ENCODE measurements at regions of chr17 and their contacts with region 1.

Region 1: DNA sequence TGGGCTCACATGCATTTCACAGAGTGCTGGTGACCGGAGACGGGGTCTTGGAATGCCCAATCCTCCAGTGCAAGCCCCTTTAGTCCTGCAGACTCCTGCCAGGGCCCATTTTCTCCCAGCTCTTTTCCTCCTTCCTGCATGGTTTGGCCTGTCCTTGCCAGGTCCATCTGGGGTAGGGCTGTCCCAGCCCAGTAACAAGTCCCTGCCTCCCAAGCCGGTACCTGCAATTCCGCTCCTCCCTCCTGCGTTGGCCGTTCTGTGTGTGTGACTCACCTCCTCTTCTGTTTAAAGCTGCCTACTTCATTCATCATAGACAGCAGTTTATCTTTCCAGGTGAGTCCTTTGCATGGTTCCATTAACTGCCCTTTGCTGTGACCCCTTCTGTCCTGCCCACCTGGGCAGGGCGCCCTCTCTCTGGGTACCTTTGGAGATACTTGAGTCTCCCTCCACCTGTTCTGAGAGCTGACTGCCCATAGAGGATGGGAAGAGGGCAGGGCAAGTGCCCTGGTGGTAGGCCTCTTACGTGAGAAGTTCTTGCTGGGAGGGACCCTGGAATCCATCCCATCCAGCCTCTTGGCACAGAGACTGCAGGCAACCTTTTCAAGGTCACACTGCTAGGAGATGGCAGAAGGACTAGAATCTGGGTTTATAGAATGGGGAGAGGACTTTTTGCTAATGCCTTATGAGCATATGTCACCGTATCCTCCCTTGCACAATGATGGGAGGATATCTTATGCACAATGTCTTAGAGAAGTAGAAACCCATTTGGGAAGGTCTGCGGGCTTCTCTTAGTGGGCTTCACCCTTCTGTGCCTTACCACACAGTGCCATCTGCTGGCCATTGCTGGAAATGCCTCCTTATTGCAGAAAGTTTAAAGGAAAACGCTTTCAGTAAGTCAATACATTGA is 29.7 kb upstream of the LGALS9 start:
- DNase-seq: peak; percentile 66 to 75 (median 69)
- H3K4me3 ChIP-seq: no peak overlapping the region
- H3K4me3 Mint-ChIP-seq: no peak overlapping the region
- H3K27ac ChIP-seq: no peak overlapping the region
- H3K27ac Mint-ChIP-seq: peak overlapping the region in 2 of 7 donors; percentile 19 to 55
- H3K4me1 ChIP-seq: peaks cover 3% of the 10 kb centered on the region
- H3K4me1 Mint-ChIP-seq: peaks cover 0 to 5% (median 3%) of the 10 kb centered on the region in 4 donors
- H3K27me3 ChIP-seq: no peaks in the 10 kb centered on the region
- H3K27me3 Mint-ChIP-seq: no peaks in the 10 kb centered on the region

Region 2: DNA sequence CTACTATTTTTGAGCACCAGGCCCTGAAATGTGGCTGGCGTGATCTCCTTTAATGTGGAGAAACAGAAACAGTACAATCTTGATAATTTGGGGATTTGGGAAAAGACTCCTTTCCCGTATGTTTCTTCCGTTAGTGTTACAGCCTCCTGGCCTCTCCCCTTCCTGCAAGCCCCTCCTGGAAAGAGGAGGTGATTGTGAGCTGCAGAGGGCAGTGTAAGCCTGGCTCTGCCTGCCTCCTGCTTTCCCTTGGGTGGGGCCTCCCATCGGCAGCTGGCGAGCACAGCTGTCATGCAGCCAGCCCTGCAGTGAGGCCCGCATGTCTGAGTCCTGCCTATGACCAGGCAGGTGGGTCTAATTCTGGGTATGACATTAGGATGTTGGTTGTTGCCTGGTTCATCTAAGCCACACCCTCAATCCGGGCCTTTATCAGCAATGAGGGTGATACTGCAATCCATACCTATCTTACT is 356.1 kb before region 1 on chr17:
- CTCF ChIA-PET with region 1: interaction called, 332 read pairs
- POLR2A ChIA-PET with region 1: no interaction called
- intact Hi-C with region 1: no loop called
- DNase-seq: peak; percentile 5 to 38 (median 10)
- H3K4me3 ChIP-seq: no peak overlapping the region
- H3K4me3 Mint-ChIP-seq: no peak overlapping the region
- H3K27ac ChIP-seq: no peak overlapping the region
- H3K27ac Mint-ChIP-seq: no peak overlapping the region
- H3K4me1 ChIP-seq: no peaks in the 10 kb centered on the region
- H3K4me1 Mint-ChIP-seq: no peaks in the 10 kb centered on the region
- H3K27me3 ChIP-seq: no peaks in the 10 kb centered on the region
- H3K27me3 Mint-ChIP-seq: peaks cover 0 to 9% of the 10 kb centered on the region in 2 donors

Region 3: DNA sequence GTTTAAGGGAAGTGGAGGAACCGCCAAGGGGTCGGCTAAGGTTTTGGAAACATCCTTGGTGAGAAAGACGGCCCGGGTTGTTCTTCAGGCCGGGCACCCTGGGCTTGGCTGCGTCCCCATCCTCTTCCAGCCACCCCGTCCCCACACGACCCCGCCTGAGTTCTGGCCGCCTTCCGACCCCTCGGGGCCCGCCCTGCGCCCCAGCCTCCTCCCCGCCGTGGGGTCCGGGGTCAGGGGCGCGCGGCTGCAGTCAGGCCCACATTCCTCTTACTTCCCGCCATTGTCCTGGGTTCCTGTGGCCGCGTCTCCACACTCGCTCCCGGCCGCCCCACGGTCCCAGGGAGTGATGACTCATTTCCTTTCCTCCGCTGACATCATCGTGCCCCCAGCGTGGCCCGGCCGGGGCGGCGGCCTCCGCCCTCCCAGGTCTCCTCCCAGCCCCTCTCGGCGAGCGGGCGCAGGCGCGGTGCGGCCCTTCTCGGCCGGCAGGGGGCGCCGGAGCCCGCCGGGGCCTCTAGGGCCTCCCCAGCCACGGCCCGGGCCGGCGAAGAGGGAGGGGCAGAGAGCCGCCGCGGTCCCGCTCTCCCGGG is 247.8 kb before region 1 on chr17:
- CTCF ChIA-PET with region 1: interaction called, 146 read pairs
- POLR2A ChIA-PET with region 1: interaction called, 11 read pairs
- intact Hi-C with region 1: loop called (anchors 1 kb)
- DNase-seq: peak; percentile 82 to 88 (median 83)
- H3K4me3 ChIP-seq: peak overlapping the region; percentile 36 to 68
- H3K4me3 Mint-ChIP-seq: peak overlapping the region; percentile 68 to 89 (median 86)
- H3K27ac ChIP-seq: peak overlapping the region; percentile 80
- H3K27ac Mint-ChIP-seq: peak overlapping the region; percentile 75 to 97 (median 95)
- H3K4me1 ChIP-seq: peaks cover 16% of the 10 kb centered on the region
- H3K4me1 Mint-ChIP-seq: peaks cover 10 to 27% (median 19%) of the 10 kb centered on the region in 4 donors
- H3K27me3 ChIP-seq: no peaks in the 10 kb centered on the region
- H3K27me3 Mint-ChIP-seq: no peaks in the 10 kb centered on the region

Region 4: DNA sequence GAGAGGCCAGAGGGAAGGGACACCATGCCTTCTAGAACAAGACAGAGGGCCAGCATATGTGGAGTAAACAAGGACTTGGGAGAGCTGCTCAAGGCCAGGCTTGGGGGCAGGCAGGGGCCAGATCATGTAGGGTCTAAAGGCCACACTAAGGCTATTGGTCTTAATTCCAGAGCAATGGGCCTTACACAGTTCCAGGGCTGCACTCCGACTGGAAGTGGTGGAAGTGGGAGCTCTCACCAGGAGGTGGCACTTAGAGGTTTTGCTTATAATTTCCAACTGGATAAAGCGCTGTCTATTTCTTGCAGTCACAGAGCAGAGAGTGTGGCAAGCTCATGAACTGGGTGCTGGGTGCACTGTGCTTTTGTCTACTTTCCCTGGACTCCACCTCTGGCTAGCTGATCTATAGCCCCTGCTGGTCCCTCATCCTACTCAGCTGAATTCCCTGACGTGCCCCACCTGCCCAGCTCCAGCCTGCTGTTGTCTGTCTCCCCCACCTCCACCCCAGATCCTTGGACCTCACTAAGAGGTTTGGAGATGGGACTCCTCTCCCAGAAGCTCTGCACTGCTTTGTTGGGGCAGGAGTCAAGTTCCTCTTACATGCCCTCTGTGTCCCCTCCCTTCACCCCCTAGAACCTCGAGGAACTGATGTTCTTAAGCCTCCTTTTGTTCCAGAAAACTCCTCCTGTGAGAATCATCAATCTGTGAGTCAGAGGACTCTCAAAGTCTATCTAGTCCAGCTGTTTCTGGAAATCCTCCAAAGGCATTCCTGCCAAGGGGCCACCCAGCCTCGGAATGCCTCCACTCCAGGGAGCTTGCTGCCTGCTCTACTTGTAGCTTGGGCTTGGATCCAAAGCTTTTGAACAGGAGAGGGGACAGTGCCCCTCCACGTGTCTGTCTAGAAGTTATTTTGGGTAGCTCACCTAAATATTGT is 193.1 kb before region 1 on chr17:
- CTCF ChIA-PET with region 1: interaction called, 18 read pairs
- POLR2A ChIA-PET with region 1: no interaction called
- intact Hi-C with region 1: no loop called
- DNase-seq: no peak
- H3K4me3 ChIP-seq: no peak overlapping the region
- H3K4me3 Mint-ChIP-seq: no peak overlapping the region
- H3K27ac ChIP-seq: no peak overlapping the region
- H3K27ac Mint-ChIP-seq: peak overlapping the region in 1 of 7 donors; percentile 82
- H3K4me1 ChIP-seq: no peaks in the 10 kb centered on the region
- H3K4me1 Mint-ChIP-seq: no peaks in the 10 kb centered on the region
- H3K27me3 ChIP-seq: no peaks in the 10 kb centered on the region
- H3K27me3 Mint-ChIP-seq: peaks cover 2 to 7% of the 10 kb centered on the region in 2 donors

Region 5: DNA sequence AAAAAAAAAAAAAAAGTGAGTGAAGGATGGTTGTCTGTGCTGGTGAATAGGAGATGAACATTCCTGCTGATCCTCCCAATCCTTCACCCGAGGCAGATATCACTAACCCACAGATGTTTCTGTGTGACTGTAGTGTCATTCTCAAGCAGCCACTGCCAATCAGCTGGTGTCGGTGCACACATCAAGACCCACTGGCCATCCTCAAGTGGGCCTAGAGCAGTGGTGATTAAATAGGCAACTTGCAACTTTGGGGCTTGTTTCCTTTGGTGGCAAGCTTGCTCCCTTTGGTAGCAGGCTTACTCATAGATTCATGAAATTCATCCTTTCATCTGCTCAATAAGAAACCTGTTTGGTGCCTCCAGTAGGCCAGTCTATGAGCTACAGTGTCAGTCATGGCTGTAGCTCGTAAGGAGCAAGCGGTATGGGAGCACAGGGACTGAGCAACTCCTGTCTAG is 21.4 kb before region 1 on chr17:
- CTCF ChIA-PET with region 1: interaction called, 13 read pairs
- POLR2A ChIA-PET with region 1: no interaction called
- intact Hi-C with region 1: no loop called
- DNase-seq: no peak
- H3K4me3 ChIP-seq: no peak overlapping the region
- H3K4me3 Mint-ChIP-seq: no peak overlapping the region
- H3K27ac ChIP-seq: no peak overlapping the region
- H3K27ac Mint-ChIP-seq: peak overlapping the region in 4 of 7 donors; percentile 27 to 65 (median 52)
- H3K4me1 ChIP-seq: peaks cover 11% of the 10 kb centered on the region
- H3K4me1 Mint-ChIP-seq: peaks cover 8 to 18% (median 14%) of the 10 kb centered on the region in 4 donors
- H3K27me3 ChIP-seq: no peaks in the 10 kb centered on the region
- H3K27me3 Mint-ChIP-seq: no peaks in the 10 kb centered on the region

Region 6: DNA sequence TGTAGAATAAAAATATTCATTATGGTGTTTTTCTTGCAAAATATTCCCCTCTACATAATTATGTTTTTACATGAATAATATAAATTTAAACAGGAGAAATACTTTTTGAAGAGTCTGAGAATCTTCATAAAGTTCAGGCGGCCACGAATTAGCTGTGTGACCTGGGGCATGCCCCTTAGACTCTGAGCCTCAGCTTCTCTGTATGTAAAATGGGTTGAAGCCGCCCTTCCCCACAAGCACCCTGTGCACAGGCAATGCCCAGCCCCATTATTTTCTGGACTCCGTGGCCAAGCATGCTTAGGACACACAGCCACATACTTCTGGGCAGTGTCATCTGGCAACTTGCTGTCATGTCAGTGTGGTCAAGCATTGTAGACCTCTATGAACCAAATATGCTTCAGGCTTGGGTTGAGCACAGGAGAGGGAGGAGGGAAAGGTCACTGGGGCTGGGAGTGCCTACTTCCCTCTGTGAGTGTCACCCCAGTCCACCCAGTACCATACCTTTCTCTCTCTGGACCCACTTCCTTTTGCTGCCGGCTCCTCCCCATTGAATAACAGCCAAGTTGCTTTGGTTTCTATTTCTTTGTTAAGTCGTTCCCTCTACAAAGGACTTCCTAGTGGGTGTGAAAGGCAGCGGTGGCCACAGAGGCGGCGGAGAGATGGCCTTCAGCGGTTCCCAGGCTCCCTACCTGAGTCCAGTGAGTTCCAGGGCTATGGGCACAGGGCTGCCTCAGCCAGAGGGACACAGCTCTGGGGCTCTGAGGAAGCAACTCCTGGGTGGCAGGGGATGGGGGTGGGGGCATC is 29.5 kb after region 1 on chr17 and contains the start of gene LGALS9:
- CTCF ChIA-PET with region 1: interaction called, 51 read pairs
- POLR2A ChIA-PET with region 1: interaction called, 3 read pairs
- intact Hi-C with region 1: loop called (anchors 1 kb)
- DNase-seq: peak; percentile 43 to 59 (median 47)
- H3K4me3 ChIP-seq: peak within 1 kb of the TSS; percentile 53 to 73
- H3K4me3 Mint-ChIP-seq: peak within 1 kb of the TSS; percentile 89 to 96 (median 94)
- H3K27ac ChIP-seq: peak within 1 kb of the TSS; percentile 71
- H3K27ac Mint-ChIP-seq: peak within 1 kb of the TSS; percentile 81 to 96 (median 93)
- H3K4me1 ChIP-seq: peaks cover 41% of the 10 kb centered on the region
- H3K4me1 Mint-ChIP-seq: peaks cover 24 to 57% (median 31%) of the 10 kb centered on the region in 4 donors
- H3K27me3 ChIP-seq: no peaks in the 10 kb centered on the region
- H3K27me3 Mint-ChIP-seq: no peaks in the 10 kb centered on the region
- total RNA-seq, gene LGALS9: 19.9 to 24.6 TPM

Region 7: DNA sequence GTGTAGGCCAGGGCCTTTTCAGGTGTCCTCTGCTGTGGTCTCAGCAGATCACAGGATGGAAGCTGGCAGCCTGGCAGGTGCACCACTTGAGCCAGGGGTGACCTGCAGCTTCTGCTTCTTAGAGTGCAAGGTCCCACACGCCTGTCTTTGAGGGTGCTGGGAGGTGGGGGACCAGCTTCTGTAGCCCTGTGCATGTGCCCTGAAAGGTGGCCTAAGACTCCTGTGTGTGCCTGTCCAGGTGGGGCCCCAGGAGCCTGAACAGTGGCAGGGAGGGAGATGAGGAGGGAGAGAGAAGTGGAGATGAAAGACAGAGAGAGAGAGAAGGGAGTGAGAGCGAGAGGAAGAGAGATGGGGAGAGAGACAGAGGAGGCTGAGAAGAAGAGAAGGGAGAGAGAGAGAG is 75.9 kb after region 1 on chr17:
- CTCF ChIA-PET with region 1: no interaction called
- POLR2A ChIA-PET with region 1: no interaction called
- intact Hi-C with region 1: no loop called
- DNase-seq: no peak
- H3K4me3 ChIP-seq: no peak overlapping the region
- H3K4me3 Mint-ChIP-seq: no peak overlapping the region
- H3K27ac ChIP-seq: no peak overlapping the region
- H3K27ac Mint-ChIP-seq: peak overlapping the region in 1 of 7 donors; percentile 5
- H3K4me1 ChIP-seq: no peaks in the 10 kb centered on the region
- H3K4me1 Mint-ChIP-seq: no peaks in the 10 kb centered on the region
- H3K27me3 ChIP-seq: no peaks in the 10 kb centered on the region
- H3K27me3 Mint-ChIP-seq: peaks cover 3 to 7% of the 10 kb centered on the region in 2 donors

Measured in CD4-positive, alpha-beta memory T cell (primary cell).